PC-3 (cell line): ENCODE measurements at regions of chr2 and their contacts with region 1.

Region 1: GRCh38 chr2:143110758-143111428 is 18.3 kb upstream of the ARHGAP15 start:
- DNase-seq: peak; percentile 78
- ATAC-seq: peak; percentile 74
- H3K4me3 ChIP-seq: no peak overlapping the region
- H3K27ac ChIP-seq: no peak overlapping the region
- H3K4me1 ChIP-seq: no peaks in the 10 kb centered on the region
- H3K27me3 ChIP-seq: peaks cover 25% of the 10 kb centered on the region
- CTCF ChIP-seq: peak; percentile 86

Region 2: DNA sequence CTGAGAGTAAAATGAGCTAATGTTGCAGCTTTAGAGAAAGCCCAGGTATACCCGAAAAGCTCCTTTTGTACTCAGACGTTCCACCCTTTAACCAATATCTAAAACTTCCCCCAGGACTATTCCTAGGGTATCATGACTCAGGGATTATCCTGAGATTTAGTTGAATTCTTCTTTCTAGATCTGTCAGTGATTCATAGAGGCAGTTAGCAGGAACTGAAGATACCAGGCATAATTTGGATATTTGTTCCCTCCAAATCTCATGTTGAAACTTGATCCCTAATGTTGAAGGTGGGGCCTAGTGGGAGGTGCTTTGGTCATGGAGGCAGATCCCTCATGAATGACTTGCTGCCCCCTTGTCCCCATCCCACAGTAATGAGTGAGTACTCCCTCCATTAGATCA is 818.9 kb before region 1 on chr2:
- CTCF ChIA-PET with region 1: no interaction called
- POLR2A ChIA-PET with region 1: no interaction called
- intact Hi-C with region 1: no loop called
- DNase-seq: peak; percentile 25
- ATAC-seq: no peak; the same call in 1 of the 2 replicates
- H3K4me3 ChIP-seq: no peak overlapping the region
- H3K27ac ChIP-seq: no peak overlapping the region
- H3K4me1 ChIP-seq: no peaks in the 10 kb centered on the region
- H3K27me3 ChIP-seq: no peaks in the 10 kb centered on the region
- CTCF ChIP-seq: no peak

Region 3: DNA sequence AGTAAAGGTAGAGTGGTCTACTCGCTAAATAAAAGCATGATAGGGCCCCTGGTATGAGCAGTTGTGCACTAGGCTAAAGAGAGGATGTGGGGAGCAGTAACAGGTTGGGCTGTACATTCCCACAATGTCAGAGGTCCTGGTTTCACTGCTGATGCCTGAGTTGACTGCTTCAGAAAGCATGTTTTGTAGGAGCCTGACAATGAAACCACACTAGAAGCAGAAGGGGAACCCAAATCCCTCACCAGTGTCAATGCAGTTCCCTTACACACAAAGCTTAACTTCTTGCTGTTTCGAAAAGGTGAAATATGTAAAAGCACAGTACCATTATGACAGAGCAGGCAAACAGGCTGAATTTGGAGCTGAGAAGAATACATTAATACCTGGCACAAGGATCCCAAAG is 525.1 kb before region 1 on chr2:
- CTCF ChIA-PET with region 1: no interaction called
- POLR2A ChIA-PET with region 1: no interaction called
- intact Hi-C with region 1: no loop called
- DNase-seq: no peak
- ATAC-seq: no peak
- H3K4me3 ChIP-seq: no peak overlapping the region
- H3K27ac ChIP-seq: no peak overlapping the region
- H3K4me1 ChIP-seq: no peaks in the 10 kb centered on the region
- H3K27me3 ChIP-seq: no peaks in the 10 kb centered on the region
- CTCF ChIP-seq: no peak

Region 4: DNA sequence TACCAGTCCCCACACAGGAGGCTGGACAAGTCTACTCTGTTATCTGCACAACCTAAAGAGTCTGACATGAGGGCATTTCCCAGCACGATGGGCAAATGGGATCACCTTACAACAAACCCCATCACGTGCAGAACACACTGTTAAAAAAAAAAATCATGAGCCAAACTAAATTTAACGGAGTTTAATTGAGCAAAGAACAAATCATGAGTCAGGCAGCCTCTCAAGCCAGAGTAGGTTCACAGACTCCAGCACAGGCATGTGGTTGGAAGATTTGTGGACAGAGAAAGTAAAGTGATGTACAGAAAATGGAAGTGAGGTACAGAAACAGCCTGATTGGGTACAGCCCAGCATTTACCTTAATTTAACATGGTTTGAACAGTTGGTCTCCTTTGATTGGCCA is 173.5 kb before region 1 on chr2:
- CTCF ChIA-PET with region 1: no interaction called
- POLR2A ChIA-PET with region 1: no interaction called
- intact Hi-C with region 1: no loop called
- DNase-seq: no peak
- ATAC-seq: peak; percentile 65
- H3K4me3 ChIP-seq: no peak overlapping the region
- H3K27ac ChIP-seq: no peak overlapping the region
- H3K4me1 ChIP-seq: no peaks in the 10 kb centered on the region
- H3K27me3 ChIP-seq: no peaks in the 10 kb centered on the region
- CTCF ChIP-seq: no peak

Region 5: GRCh38 chr2:143034292-143035074 is 76.4 kb before region 1 on chr2:
- CTCF ChIA-PET with region 1: interaction called, 3 read pairs
- POLR2A ChIA-PET with region 1: no interaction called
- intact Hi-C with region 1: loop called (anchors 5 kb)
- DNase-seq: peak; percentile 88
- ATAC-seq: peak; percentile 62
- H3K4me3 ChIP-seq: no peak overlapping the region
- H3K27ac ChIP-seq: no peak overlapping the region
- H3K4me1 ChIP-seq: no peaks in the 10 kb centered on the region
- H3K27me3 ChIP-seq: no peaks in the 10 kb centered on the region
- CTCF ChIP-seq: peak; percentile 98

Region 6: DNA sequence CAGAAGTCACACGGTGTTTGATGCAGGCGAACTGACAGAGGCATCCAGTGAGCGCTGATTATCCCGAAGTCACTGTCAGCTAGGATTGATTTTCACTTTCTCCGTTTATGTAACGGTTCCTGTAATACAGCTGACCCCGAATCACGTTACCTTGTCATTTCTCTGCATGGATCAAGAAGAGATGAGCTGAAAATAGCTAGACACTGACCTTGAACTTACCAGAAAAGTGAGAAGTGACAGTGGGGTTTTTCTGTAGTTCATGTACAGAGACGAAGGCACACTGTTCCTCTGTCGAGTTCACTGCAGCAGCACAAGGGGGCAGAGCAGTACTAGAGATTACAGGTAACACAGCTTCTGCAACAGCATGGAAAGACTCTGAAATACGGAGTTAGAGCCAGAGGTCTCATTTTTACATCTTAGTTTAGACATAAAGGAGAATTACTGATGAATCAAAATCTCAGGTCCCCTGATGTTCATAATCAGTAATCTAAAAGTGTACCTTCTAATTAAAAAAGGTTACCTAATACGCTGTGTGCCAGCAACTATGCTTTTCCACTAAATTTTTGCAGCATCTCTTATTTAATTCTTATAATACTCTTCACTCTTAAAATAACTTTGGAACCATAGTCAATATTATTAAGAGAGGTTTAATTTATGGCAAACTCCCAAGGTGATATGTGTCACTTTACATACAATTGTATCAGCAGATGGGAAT is 51.4 kb after region 1 on chr2:
- CTCF ChIA-PET with region 1: no interaction called
- POLR2A ChIA-PET with region 1: no interaction called
- intact Hi-C with region 1: loop called (anchors 5 kb)
- DNase-seq: peak; percentile 52
- ATAC-seq: peak; percentile 95
- H3K4me3 ChIP-seq: no peak overlapping the region
- H3K27ac ChIP-seq: no peak overlapping the region
- H3K4me1 ChIP-seq: no peaks in the 10 kb centered on the region
- H3K27me3 ChIP-seq: peaks cover 61% of the 10 kb centered on the region
- CTCF ChIP-seq: peak; percentile 74